Activated naive CD4-positive, alpha-beta T cell treated with anti-CD3 and anti-CD28 coated beads for 36 hours (primary cell): ENCODE measurements at regions of chr22 and their contacts with region 1.

Region 1: GRCh38 chr22:21652010-21652546 is 10.0 kb downstream of the SDF2L1 start:
- DNase-seq: peak; percentile 94
- H3K4me3 Mint-ChIP-seq: peak overlapping the region; percentile 88
- H3K27ac Mint-ChIP-seq: peak overlapping the region; percentile 75
- H3K4me1 Mint-ChIP-seq: peaks cover 25% of the 10 kb centered on the region
- H3K27me3 Mint-ChIP-seq: no peaks in the 10 kb centered on the region

Region 2: GRCh38 chr22:21593406-21594232 is 58.5 kb before region 1 on chr22:
- CTCF ChIA-PET with region 1: interaction called, 3 read pairs
- intact Hi-C with region 1: loop called (anchors 10 kb)
- DNase-seq: no peak
- H3K4me3 Mint-ChIP-seq: no peak overlapping the region
- H3K27ac Mint-ChIP-seq: peak overlapping the region; percentile 15
- H3K4me1 Mint-ChIP-seq: peaks cover 47% of the 10 kb centered on the region
- H3K27me3 Mint-ChIP-seq: no peaks in the 10 kb centered on the region

Region 3: GRCh38 chr22:21612865-21613265 is 39.2 kb before region 1 on chr22:
- CTCF ChIA-PET with region 1: interaction called, 5 read pairs
- intact Hi-C with region 1: loop called (anchors 5 kb)
- DNase-seq: no peak
- H3K4me3 Mint-ChIP-seq: no peak overlapping the region
- H3K27ac Mint-ChIP-seq: no peak overlapping the region
- H3K4me1 Mint-ChIP-seq: peaks cover 16% of the 10 kb centered on the region
- H3K27me3 Mint-ChIP-seq: no peaks in the 10 kb centered on the region

Region 4: GRCh38 chr22:21641789-21642583 is 10.1 kb before region 1 on chr22 and contains the start of gene SDF2L1:
- CTCF ChIA-PET with region 1: interaction called, 10 read pairs
- intact Hi-C with region 1: loop called (anchors 1 kb)
- DNase-seq: peak; percentile 99
- H3K4me3 Mint-ChIP-seq: peak within 1 kb of the TSS; percentile 90
- H3K27ac Mint-ChIP-seq: peak within 1 kb of the TSS; percentile 73
- H3K4me1 Mint-ChIP-seq: peaks cover 30% of the 10 kb centered on the region
- H3K27me3 Mint-ChIP-seq: no peaks in the 10 kb centered on the region
- total RNA-seq, gene SDF2L1: 21.7 to 22.3 TPM